ENCODE measurements at regions of chr5 and their contacts with region 1.

Region 1: DNA sequence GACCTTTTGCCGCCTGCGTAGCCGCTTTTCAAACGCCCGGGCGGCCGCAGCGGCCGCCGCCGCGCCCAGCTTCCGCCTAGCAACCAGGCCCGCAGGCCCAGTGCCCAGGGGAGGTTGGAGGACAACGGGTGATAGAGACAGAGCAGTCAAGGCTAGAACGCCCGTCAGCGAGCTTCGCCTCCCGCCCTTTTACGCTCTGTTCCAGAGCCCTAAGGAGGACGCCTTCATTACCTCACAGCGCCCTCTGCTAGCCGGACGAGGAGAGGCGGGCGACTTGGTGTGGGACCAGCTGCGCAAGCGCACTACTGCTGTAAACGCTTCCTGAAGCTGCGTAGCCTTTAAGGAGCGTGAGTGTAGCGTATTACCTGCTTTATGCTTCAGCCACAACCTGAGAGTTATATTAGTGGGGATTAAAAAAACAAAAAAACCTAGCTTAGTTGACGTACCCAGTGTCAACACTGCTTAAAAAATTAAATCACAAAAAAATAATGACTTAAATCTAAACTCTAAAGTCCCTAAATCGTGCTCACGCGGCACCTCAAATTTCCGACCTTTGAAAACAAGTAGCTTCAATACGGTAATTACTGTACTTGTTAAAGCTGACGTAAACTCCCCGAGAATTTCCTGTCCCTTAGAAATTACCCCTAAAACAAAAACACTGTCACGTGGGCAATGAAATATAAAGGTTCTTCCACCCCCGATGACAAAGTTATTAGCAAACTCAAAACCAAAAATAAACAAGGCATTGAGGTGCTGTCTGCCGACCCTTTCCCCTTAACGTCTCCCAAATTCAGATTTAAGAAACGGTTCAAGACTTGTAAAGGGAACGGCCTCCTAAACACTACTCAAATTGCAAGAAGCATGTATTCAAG is at the start of gene CEP120:
- DNase-seq: peak; percentile 99
- H3K4me3 ChIP-seq: peak within 1 kb of the TSS; percentile 74 to 99 (median 84)
- H3K27ac ChIP-seq: peak within 1 kb of the TSS; percentile 86 to 98 (median 90)
- H3K4me1 ChIP-seq: peaks cover 18 to 29% (median 22%) of the 10 kb centered on the region in 4 donors
- H3K27me3 ChIP-seq: no peaks in the 10 kb centered on the region
- CTCF ChIP-seq: peak; percentile 55 to 74 (median 67)
- EP300 ChIP-seq: no peak
- POLR2A ChIP-seq: no peak
- total RNA-seq, gene CEP120: 14.3 to 24.1 (median 15.8) TPM

Region 2: GRCh38 chr5:123099514-123100151 is 323.9 kb before region 1 on chr5:
- intact Hi-C with region 1: no loop called
- DNase-seq: no peak
- H3K4me3 ChIP-seq: peak overlapping the region; percentile 13 to 43 (median 32)
- H3K27ac ChIP-seq: no peak overlapping the region
- H3K4me1 ChIP-seq: peaks cover 10 to 30% (median 20%) of the 10 kb centered on the region in 4 donors
- H3K27me3 ChIP-seq: peaks cover 0 to 55% (median 24%) of the 10 kb centered on the region in 4 donors
- CTCF ChIP-seq: peak in 2 of 3 experiments; percentile 8 to 10
- EP300 ChIP-seq: no peak
- POLR2A ChIP-seq: no peak

Region 3: GRCh38 chr5:123511648-123512605 is 88.4 kb after region 1 on chr5 and contains the start of gene CSNK1G3:
- intact Hi-C with region 1: loop called (anchors 2 kb)
- DNase-seq: peak; percentile 99
- H3K4me3 ChIP-seq: peak within 1 kb of the TSS; percentile 90 to 96 (median 94)
- H3K27ac ChIP-seq: peak within 1 kb of the TSS; percentile 94 to 98 (median 96)
- H3K4me1 ChIP-seq: peaks cover 7 to 48% (median 36%) of the 10 kb centered on the region in 4 donors
- H3K27me3 ChIP-seq: no peaks in the 10 kb centered on the region
- CTCF ChIP-seq: no peak
- EP300 ChIP-seq: no peak
- POLR2A ChIP-seq: peak; percentile 68
- total RNA-seq, gene CSNK1G3: 31.2 to 53.7 (median 53.1) TPM

Region 4: GRCh38 chr5:123610665-123611405 is 187.3 kb after region 1 on chr5:
- intact Hi-C with region 1: loop called (anchors 5 kb)
- DNase-seq: no peak
- H3K4me3 ChIP-seq: no peak overlapping the region
- H3K27ac ChIP-seq: no peak overlapping the region
- H3K4me1 ChIP-seq: peaks cover 0 to 6% (median 0%) of the 10 kb centered on the region in 4 donors
- H3K27me3 ChIP-seq: no peaks in the 10 kb centered on the region
- CTCF ChIP-seq: peak in 2 of 3 experiments; percentile 95 to 96
- EP300 ChIP-seq: no peak
- POLR2A ChIP-seq: no peak

Region 5: GRCh38 chr5:124330595-124331220 is 907.2 kb after region 1 on chr5:
- intact Hi-C with region 1: no loop called
- DNase-seq: no peak
- H3K4me3 ChIP-seq: no peak overlapping the region
- H3K27ac ChIP-seq: no peak overlapping the region
- H3K4me1 ChIP-seq: no peaks in the 10 kb centered on the region
- H3K27me3 ChIP-seq: no peaks in the 10 kb centered on the region
- CTCF ChIP-seq: no peak
- EP300 ChIP-seq: no peak
- POLR2A ChIP-seq: no peak